Dendritic cell treated with granulocyte-macrophage colony-stimulating factor and Interleukin-4, amounts not matched to agents 40 ng/mL and 50 ng/mL, for 4 days (primary cell): ENCODE measurements at regions of chr1 and their contacts with region 1.

Region 1: DNA sequence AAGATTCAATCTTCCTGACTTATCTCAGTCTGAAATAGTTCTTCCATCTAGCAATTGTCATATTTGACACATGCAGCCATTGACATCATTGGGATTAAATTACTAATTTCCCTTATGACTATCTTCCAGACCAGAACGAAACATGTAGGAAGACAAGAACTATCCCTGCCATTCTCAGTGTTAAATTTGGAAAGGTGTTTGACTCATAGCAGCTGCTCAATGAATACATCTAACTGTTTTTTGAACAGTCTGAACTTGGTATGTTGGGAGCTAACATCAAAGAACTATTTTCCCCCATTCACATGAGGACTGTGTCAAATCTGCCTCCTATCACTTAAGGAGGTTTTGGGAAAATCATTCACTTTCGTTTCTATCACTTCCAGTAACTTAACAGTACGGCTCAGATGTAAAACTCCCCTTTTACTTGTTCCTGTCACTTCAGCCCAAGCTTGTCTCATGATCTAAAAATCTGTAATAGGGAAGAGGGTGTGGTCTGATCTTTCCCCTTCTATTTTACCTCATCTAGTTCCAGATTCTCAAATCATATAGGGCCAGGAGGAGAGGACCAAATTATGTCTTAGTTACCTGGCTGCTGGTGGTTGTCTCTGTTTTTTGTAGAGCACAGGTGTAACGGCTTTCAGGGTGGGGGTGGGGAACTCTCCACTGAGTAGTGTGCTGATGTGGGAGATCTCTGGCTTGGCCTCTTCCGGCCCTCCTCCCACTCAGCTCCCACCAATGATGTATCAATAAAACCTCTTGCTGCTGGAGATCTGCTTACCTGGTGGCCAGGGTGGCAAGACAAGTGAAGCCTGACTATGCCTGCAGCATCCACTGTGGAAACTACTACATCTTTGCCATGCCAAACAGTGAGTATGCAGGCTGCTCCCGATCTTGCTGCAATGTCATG is 26.2 kb upstream of the SLAMF1 start:
- H3K4me3 Mint-ChIP-seq: no peak overlapping the region
- H3K27ac Mint-ChIP-seq: no peak overlapping the region
- H3K4me1 Mint-ChIP-seq: peaks cover 31% of the 10 kb centered on the region
- H3K27me3 Mint-ChIP-seq: no peaks in the 10 kb centered on the region

Region 2: DNA sequence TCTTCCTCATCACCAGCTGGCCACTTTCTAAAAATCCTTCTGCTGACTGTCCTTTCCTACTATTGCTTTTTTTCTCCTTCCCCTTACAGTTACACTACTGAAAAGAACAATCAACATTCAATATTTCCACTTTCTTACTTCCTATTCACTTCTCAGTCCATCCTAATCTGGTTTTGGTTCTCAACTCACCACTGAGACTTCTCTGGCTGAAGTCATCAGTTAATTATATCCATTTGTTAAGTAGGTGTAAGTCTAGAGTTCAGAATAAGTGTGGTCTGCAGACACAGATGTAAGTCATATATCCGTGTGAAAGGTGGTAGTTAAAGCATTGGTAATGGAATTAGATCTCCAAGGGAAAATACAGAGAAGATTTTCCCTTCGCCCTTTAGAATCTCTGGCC is 446.4 kb before region 1 on chr1:
- intact Hi-C with region 1: no loop called
- H3K4me3 Mint-ChIP-seq: no peak overlapping the region
- H3K27ac Mint-ChIP-seq: no peak overlapping the region
- H3K4me1 Mint-ChIP-seq: no peaks in the 10 kb centered on the region
- H3K27me3 Mint-ChIP-seq: no peaks in the 10 kb centered on the region

Region 3: DNA sequence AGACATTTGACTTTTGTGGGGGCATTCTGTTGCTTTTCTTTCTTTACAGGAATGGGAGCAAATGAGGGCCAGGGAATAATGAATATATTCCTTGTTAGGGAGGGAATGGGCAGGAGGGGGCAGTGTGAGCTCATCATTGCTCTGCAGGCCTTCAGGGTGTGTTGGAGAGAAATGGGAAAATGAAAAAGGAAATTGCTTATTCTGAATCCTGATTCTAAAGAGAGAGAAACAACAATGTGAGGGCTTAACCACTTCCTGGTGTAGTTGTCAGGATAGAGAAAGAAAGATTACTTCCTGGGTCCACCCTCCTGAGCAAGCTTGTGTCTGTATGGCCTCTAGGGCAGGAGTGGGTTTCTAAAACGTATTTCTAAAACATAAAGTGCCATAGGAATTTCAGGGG is 244.4 kb before region 1 on chr1:
- intact Hi-C with region 1: loop called (anchors 2 kb)
- H3K4me3 Mint-ChIP-seq: no peak overlapping the region
- H3K27ac Mint-ChIP-seq: peak overlapping the region; percentile 63
- H3K4me1 Mint-ChIP-seq: peaks cover 37% of the 10 kb centered on the region
- H3K27me3 Mint-ChIP-seq: no peaks in the 10 kb centered on the region

Region 4: DNA sequence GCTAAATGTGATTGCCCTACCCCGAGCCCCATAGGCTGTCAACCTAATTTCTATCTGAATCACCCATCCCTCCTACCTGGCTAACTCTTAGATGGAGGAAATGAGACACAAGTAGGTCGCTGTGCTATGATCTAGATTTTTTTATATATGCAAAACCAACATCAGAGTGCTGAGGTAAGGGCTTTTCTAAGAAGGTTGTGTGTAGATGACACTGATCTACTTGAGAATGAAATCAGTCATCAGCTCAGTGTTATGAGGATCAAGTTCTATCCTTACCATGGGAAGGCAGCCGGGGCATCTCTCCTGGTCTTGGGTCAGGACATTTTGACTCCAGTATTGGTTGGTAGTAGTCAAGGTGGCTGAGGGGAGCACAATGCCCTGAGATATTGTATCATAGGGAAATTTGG is 49.8 kb before region 1 on chr1:
- intact Hi-C with region 1: no loop called
- H3K4me3 Mint-ChIP-seq: no peak overlapping the region
- H3K27ac Mint-ChIP-seq: peak overlapping the region; percentile 81
- H3K4me1 Mint-ChIP-seq: peaks cover 86% of the 10 kb centered on the region
- H3K27me3 Mint-ChIP-seq: no peaks in the 10 kb centered on the region